Breast epithelium (tissue), 4 donors: ENCODE measurements at regions of chr12 and their contacts with region 1.

Region 1: DNA sequence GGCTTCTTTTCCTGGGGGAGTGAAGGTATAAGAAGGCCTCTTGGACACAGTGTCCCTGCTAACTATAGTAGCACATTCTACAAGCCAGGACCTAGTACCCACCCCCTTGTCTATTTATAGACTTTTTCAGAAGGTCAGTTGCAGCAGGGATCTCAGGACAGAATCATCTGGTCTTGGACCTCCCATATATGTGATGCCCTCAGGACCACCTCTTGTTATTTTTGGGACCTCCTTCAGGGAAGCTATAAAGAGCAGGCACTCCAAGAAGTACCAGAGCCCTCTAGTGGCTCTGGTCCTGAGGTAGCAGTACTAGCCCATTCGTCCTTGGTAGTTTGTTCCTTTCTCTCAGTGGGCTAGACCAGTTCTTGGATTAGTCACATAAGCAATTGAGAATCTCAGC is 4.3 kb downstream of the COQ10A start:
- DNase-seq: no peak
- H3K4me3 ChIP-seq: no peak overlapping the region
- H3K27ac ChIP-seq: no peak overlapping the region
- H3K4me1 ChIP-seq: peaks cover 0 to 3% of the 10 kb centered on the region in 2 donors
- H3K27me3 ChIP-seq: no peaks in the 10 kb centered on the region
- CTCF ChIP-seq: no peak
- POLR2A ChIP-seq: no peak

Region 2: GRCh38 chr12:57182921-57183790 is 912.1 kb after region 1 on chr12:
- intact Hi-C with region 1: loop called (anchors 5 kb)
- DNase-seq: peak; percentile 61 to 83
- H3K4me3 ChIP-seq: no peak overlapping the region
- H3K27ac ChIP-seq: peak overlapping the region in 1 of 2 donors; percentile 3
- H3K4me1 ChIP-seq: no peaks in the 10 kb centered on the region
- H3K27me3 ChIP-seq: no peaks in the 10 kb centered on the region
- CTCF ChIP-seq: peak; percentile 82 to 93 (median 91)
- POLR2A ChIP-seq: no peak